MCF 10A (cell line): ENCODE measurements at regions of chr1 and their contacts with region 1.

Region 1: DNA sequence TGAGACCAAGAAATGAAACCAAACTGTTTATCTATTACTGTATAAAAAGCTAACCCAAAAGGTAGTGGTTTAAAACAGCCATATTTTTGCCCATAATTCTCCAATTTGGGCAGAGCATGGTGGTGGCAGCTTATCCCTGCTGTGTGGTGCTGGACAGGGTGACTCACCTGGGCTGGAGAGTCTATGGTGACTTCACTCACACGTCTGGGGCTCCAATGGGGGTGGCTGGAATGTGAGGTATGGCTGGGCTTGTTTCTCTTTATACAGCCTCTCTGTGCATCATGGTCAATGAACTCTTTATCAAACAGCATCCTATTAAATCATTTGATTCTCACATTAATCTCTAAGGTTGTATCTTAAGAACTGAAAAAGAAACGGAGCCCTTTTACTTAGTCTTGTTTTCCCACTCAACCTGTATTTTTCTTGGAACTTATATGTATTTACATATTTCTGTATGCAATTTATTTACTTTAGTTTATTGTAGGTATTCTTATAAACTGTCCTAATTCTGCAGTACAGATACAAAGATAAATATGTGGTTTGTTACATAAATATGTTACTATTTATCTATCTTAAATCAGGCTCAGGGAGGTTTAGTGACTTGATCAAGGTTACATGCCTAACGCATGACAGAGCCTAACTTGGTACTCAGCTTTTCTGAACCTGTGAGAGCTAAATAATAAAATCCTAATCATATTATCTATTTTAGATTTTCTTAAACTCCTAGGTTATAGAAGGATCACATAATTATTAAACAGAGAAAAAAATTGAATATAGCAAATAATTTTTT is 37.5 kb upstream of the WLS start:
- DNase-seq: peak; percentile 47
- H3K4me3 Mint-ChIP-seq: no peak overlapping the region
- H3K27ac Mint-ChIP-seq: no peak overlapping the region
- H3K4me1 Mint-ChIP-seq: peaks cover 4% of the 10 kb centered on the region
- H3K27me3 Mint-ChIP-seq: no peaks in the 10 kb centered on the region
- CTCF ChIP-seq: no peak

Region 2: DNA sequence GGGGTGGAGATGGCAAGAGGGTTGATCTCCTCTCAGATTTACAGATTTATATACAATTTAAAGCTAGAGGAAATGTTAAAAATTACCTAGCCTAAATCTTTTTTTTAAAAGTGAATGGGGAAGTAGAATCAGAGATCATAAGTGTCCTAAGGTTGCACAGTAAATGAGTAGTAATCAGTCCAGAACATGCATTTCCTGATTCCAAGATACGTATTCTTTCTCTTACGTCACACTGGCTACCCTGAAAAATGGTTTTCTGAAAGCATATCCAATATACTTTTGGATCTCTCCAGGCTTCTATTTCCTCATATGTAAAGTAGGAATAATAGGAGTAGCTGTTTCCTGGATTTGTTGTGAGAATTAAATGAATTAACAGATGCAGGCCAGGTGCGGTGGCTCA is 573.1 kb before region 1 on chr1:
- CTCF ChIA-PET with region 1: no interaction called
- POLR2A ChIA-PET with region 1: no interaction called
- intact Hi-C with region 1: no loop called
- DNase-seq: no peak
- H3K4me3 Mint-ChIP-seq: no peak overlapping the region
- H3K27ac Mint-ChIP-seq: no peak overlapping the region
- H3K4me1 Mint-ChIP-seq: peaks cover 9% of the 10 kb centered on the region
- H3K27me3 Mint-ChIP-seq: no peaks in the 10 kb centered on the region
- CTCF ChIP-seq: no peak

Region 3: DNA sequence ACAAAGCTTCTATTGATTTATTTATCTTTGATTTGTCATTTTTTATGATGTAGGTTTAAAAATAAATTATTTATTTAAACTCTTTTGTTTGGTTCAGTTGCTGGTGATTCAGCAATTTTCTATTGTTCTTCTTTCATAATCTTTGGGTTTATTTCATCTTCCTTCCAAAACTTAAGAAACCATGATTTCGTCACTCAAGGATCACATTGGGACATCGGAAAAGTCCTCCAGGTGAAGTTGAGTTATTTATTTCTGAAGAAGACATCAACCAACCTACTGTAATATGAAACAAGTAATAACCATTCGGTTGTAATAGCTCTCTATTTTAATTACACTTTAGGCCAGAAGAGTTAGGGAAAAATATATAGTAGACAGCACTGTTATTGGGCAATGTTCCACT is 14.5 kb before region 1 on chr1:
- CTCF ChIA-PET with region 1: interaction called, 4 read pairs
- POLR2A ChIA-PET with region 1: interaction called, 4 read pairs
- intact Hi-C with region 1: loop called (anchors 1 kb)
- DNase-seq: peak; percentile 69
- H3K4me3 Mint-ChIP-seq: no peak overlapping the region
- H3K27ac Mint-ChIP-seq: no peak overlapping the region
- H3K4me1 Mint-ChIP-seq: no peaks in the 10 kb centered on the region
- H3K27me3 Mint-ChIP-seq: no peaks in the 10 kb centered on the region
- CTCF ChIP-seq: no peak

Region 4: GRCh38 chr1:68281946-68282615 is 12.2 kb after region 1 on chr1:
- CTCF ChIA-PET with region 1: no interaction called
- POLR2A ChIA-PET with region 1: no interaction called
- intact Hi-C with region 1: no loop called
- DNase-seq: no peak
- H3K4me3 Mint-ChIP-seq: no peak overlapping the region
- H3K27ac Mint-ChIP-seq: no peak overlapping the region
- H3K4me1 Mint-ChIP-seq: no peaks in the 10 kb centered on the region
- H3K27me3 Mint-ChIP-seq: no peaks in the 10 kb centered on the region
- CTCF ChIP-seq: no peak